Activated CD8-positive, alpha-beta T cell treated with anti-CD3 and anti-CD28 coated beads for 36 hours (primary cell): ENCODE measurements at regions of chr15 and their contacts with region 1.

Region 1: DNA sequence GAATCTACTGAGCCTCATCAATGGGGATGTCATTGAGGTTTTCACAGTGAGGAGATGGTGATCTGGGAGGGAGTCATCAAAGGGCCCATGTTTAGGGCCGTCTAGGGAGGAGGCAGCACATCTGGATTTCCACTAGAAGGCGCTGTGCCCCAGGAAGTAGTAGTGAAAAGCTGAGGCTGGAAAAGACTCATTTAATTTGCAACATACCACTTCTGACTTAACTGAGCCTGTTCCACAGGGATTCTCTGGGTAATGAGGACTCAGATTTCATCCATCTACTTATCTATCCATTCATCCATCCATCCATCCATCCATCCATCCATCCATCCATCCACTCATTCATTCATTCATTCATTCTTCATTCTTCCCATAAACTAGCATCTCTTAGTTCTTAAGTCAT is 17.4 kb upstream of the SHF start:
- DNase-seq: peak; percentile 76
- ATAC-seq: peak; percentile 34
- H3K4me3 Mint-ChIP-seq: no peak overlapping the region
- H3K27ac Mint-ChIP-seq: no peak overlapping the region
- H3K4me1 Mint-ChIP-seq: peaks cover 2% of the 10 kb centered on the region
- H3K27me3 Mint-ChIP-seq: peaks cover 6% of the 10 kb centered on the region
- CTCF ChIP-seq: peak; percentile 76

Region 2: GRCh38 chr15:45157974-45158373 is 47.2 kb before region 1 on chr15:
- CTCF ChIA-PET with region 1: interaction called, 39 read pairs
- POLR2A ChIA-PET with region 1: interaction called, 51 read pairs
- intact Hi-C with region 1: no loop called
- DNase-seq: no peak
- ATAC-seq: no peak
- H3K4me3 Mint-ChIP-seq: no peak overlapping the region
- H3K27ac Mint-ChIP-seq: no peak overlapping the region
- H3K4me1 Mint-ChIP-seq: peaks cover 3% of the 10 kb centered on the region
- H3K27me3 Mint-ChIP-seq: no peaks in the 10 kb centered on the region
- CTCF ChIP-seq: no peak

Region 3: DNA sequence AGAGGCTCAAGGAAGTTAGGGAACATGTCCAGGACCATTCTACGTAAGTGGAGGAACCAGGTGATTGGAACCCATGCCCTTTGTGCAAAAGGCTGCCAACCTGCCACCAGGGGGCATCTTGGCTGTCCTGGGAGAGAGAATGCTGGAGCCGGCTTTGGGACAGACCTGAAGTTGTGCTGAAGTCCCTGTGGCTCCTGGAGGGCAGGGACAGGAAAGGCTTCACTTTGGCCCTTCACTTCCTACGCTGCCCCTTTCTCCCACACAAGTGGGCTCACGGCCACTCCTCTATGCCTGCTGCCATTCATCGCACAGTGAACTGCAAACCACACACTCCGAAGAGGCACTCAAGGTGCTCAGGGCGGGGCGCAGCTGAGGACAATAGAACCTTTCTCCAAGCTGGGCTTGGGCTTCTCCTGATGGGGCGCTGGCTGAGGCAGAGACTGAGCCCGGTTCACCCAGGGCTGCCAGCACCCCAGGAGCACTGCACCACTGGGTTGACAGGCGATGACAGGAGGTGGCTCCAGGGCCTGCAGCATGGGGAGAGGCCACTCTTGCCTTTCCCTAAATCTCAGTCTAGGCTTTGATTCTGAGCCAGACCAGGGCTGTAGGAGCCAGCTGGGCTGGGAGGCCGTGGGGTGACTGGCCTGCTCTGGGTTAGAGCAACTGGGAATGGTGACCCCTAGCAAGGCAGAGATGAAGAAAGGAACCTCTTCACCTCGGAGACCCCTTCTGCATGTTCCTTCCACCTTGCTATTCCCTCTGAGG is 25.8 kb before region 1 on chr15:
- CTCF ChIA-PET with region 1: interaction called, 18 read pairs
- POLR2A ChIA-PET with region 1: interaction called, 85 read pairs
- intact Hi-C with region 1: no loop called
- DNase-seq: peak; percentile 59
- ATAC-seq: peak; percentile 59
- H3K4me3 Mint-ChIP-seq: no peak overlapping the region
- H3K27ac Mint-ChIP-seq: no peak overlapping the region
- H3K4me1 Mint-ChIP-seq: peaks cover 19% of the 10 kb centered on the region
- H3K27me3 Mint-ChIP-seq: no peaks in the 10 kb centered on the region
- CTCF ChIP-seq: peak; percentile 65

Region 4: DNA sequence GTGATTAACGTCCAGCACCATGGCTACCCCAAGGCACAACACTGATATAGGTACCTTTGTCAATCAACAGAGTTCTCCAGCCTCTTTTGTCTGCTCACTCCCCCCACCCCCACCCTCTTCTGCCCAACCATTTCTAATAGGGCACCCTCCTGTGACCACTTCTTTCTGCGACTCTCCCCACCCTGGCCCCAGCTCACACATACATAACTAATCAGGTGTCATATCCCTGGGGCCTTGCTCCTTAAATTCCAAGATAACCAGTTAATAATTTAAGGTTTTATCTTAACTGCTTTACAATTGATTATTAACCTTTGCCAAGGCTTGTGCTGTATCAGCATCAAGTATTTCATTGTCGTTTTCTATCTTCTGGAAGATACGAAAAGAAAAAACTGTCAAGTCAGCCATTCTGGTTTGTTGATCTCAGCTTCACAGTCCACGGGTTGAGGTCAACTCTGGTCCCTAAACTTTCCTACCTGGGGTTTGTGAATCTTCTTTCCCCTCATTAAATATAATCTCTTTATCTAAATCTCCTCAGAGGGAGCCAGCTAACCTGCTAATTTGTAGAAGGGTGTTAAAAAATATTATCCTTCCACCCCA is 19.5 kb after region 1 on chr15:
- CTCF ChIA-PET with region 1: interaction called, 14 read pairs
- POLR2A ChIA-PET with region 1: no interaction called
- intact Hi-C with region 1: no loop called
- DNase-seq: no peak
- ATAC-seq: no peak
- H3K4me3 Mint-ChIP-seq: no peak overlapping the region
- H3K27ac Mint-ChIP-seq: no peak overlapping the region
- H3K4me1 Mint-ChIP-seq: no peaks in the 10 kb centered on the region
- H3K27me3 Mint-ChIP-seq: peaks cover 12% of the 10 kb centered on the region
- CTCF ChIP-seq: no peak

Region 5: DNA sequence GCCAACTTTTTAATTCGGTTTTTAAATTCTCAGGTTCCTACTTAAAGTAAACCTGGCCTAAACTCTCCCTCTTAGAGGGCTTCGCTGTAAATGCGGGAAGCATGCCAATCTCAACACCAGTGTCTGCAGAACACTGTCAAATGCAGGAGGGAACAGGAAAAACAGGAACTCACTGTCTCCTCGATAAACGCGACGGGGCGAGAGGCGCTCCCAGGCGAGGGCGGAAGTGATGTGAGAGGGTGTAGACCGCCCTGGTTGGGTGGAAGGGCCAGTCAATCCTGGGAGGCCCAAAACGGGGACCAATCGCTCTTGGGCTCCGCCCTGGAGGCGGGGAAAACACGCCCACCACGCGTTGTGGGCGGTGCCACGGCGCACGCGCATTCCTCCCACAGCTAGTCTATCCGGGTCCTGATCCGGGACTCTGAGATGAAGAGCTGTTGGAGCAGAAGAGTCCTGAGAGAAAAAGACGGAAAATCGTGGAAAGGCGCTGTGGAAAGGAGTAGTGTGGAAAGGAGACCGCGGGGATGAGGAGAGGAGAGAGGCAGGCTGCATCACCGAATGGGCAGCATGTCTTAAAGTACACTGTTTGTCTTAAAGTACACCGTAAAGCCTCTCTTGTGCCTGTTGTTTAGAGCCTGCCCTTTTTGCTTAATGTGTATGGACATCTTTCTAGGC is 74.0 kb after region 1 on chr15:
- CTCF ChIA-PET with region 1: interaction called, 5 read pairs
- POLR2A ChIA-PET with region 1: interaction called, 5 read pairs
- intact Hi-C with region 1: loop called (anchors 2 kb)
- DNase-seq: peak; percentile 96
- ATAC-seq: peak; percentile 100
- H3K4me3 Mint-ChIP-seq: peak overlapping the region; percentile 84
- H3K27ac Mint-ChIP-seq: peak overlapping the region; percentile 87
- H3K4me1 Mint-ChIP-seq: peaks cover 16% of the 10 kb centered on the region
- H3K27me3 Mint-ChIP-seq: no peaks in the 10 kb centered on the region
- CTCF ChIP-seq: no peak

Region 6: DNA sequence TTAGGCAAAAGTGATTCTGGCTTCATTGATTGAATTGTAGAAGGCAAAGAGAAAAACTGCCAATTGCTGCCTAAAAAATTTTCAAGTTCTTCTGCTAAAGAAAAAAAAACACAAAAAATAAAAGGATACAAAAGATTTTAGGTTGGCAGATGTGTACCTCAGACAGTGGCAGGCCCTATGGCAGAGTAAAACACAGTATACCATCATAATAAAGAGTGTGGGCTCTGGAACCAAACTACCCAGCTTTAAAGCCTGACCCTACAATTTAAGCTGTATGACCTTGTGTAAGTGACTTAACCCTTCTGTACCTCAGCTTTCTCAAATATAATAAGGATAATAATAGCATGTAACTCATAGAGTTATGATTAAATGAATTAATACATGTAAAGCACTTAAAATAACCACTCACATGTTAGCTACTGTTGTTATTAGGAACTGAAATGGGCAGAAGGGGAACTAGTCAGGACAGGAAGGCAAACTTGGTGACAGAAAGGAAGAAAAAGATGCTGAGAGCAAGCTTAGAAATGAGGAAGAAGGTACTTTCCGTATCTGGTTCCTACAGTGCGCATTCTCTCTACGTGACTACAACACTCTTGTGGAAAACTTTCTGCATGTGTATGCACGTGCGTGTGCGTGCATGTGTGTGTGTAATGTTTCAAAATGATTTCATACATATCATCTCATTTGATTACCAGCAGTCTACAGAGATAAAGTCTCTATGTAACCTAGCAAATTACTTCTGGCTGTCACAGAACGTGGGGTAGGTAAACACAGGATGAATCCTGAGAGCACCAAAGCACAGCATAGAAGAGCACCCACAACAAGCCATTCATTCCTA is 186.8 kb after region 1 on chr15:
- CTCF ChIA-PET with region 1: interaction called, 128 read pairs
- POLR2A ChIA-PET with region 1: no interaction called
- intact Hi-C with region 1: no loop called
- DNase-seq: peak; percentile 14
- ATAC-seq: peak; percentile 45
- H3K4me3 Mint-ChIP-seq: no peak overlapping the region
- H3K27ac Mint-ChIP-seq: no peak overlapping the region
- H3K4me1 Mint-ChIP-seq: peaks cover 6% of the 10 kb centered on the region
- H3K27me3 Mint-ChIP-seq: peaks cover 9% of the 10 kb centered on the region
- CTCF ChIP-seq: no peak